PC-3 (cell line): ENCODE measurements at regions of chr7 and their contacts with region 1.

Region 1: GRCh38 chr7:131007394-131008330 is 273.7 kb upstream of the KLF14 start:
- DNase-seq: peak; percentile 97
- ATAC-seq: peak; percentile 75
- H3K4me3 ChIP-seq: no peak overlapping the region
- H3K27ac ChIP-seq: peak overlapping the region; percentile 74
- H3K4me1 ChIP-seq: peaks cover 46% of the 10 kb centered on the region
- H3K27me3 ChIP-seq: no peaks in the 10 kb centered on the region
- CTCF ChIP-seq: peak; percentile 77

Region 2: GRCh38 chr7:130941322-130942210 is 66.1 kb before region 1 on chr7:
- CTCF ChIA-PET with region 1: no interaction called
- POLR2A ChIA-PET with region 1: no interaction called
- intact Hi-C with region 1: loop called (anchors 1 kb)
- DNase-seq: peak; percentile 63
- ATAC-seq: peak; percentile 54
- H3K4me3 ChIP-seq: peak overlapping the region; percentile 80
- H3K27ac ChIP-seq: peak overlapping the region; percentile 87
- H3K4me1 ChIP-seq: peaks cover 63% of the 10 kb centered on the region
- H3K27me3 ChIP-seq: no peaks in the 10 kb centered on the region
- CTCF ChIP-seq: no peak

Region 3: GRCh38 chr7:131052285-131052904 is 44.7 kb after region 1 on chr7:
- CTCF ChIA-PET with region 1: no interaction called
- POLR2A ChIA-PET with region 1: no interaction called
- intact Hi-C with region 1: no loop called
- DNase-seq: no peak
- ATAC-seq: no peak
- H3K4me3 ChIP-seq: no peak overlapping the region
- H3K27ac ChIP-seq: no peak overlapping the region
- H3K4me1 ChIP-seq: no peaks in the 10 kb centered on the region
- H3K27me3 ChIP-seq: no peaks in the 10 kb centered on the region
- CTCF ChIP-seq: no peak